ENCODE measurements at regions of chr4 and their contacts with region 1.

Region 1: GRCh38 chr4:47933840-47934239 is 19.5 kb upstream of the NFXL1 start:
- DNase-seq: no peak
- H3K4me3 ChIP-seq: no peak overlapping the region
- H3K27ac ChIP-seq: no peak overlapping the region
- H3K4me1 ChIP-seq: peaks cover 0 to 8% of the 10 kb centered on the region in 2 donors
- H3K27me3 ChIP-seq: no peaks in the 10 kb centered on the region
- CTCF ChIP-seq: peak; percentile 37 to 75 (median 68)
- POLR2A ChIP-seq: no peak

Region 2: DNA sequence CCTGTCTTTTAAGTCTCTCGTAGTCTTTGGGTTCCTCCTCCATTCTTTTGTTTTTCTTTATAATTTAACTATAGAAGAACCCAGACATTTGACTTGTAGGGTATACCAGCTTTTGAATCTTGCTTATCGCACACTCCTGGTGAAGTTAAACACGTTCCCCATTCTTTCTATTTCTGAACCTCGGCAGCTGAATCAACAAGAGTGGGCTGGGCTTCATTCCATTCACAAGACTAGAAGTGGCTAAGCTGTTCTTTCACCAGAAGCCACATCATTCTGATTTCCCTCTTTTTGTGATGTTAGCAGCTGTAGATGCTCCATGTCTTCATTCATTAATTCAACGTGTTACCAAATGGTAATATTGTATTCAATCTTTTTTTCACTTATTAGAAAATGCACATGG is 263.9 kb before region 1 on chr4:
- intact Hi-C with region 1: loop called (anchors 5 to 10 kb)
- DNase-seq: no peak
- H3K4me3 ChIP-seq: no peak overlapping the region
- H3K27ac ChIP-seq: no peak overlapping the region
- H3K4me1 ChIP-seq: no peaks in the 10 kb centered on the region
- H3K27me3 ChIP-seq: no peaks in the 10 kb centered on the region
- CTCF ChIP-seq: no peak
- POLR2A ChIP-seq: no peak

Region 3: GRCh38 chr4:48190839-48191238 is 257.0 kb after region 1 on chr4:
- intact Hi-C with region 1: no loop called
- DNase-seq: no peak
- H3K4me3 ChIP-seq: no peak overlapping the region
- H3K27ac ChIP-seq: no peak overlapping the region
- H3K4me1 ChIP-seq: peaks cover 7 to 8% of the 10 kb centered on the region in 2 donors
- H3K27me3 ChIP-seq: no peaks in the 10 kb centered on the region
- CTCF ChIP-seq: no peak
- POLR2A ChIP-seq: no peak